K562 (cell line): ENCODE measurements at regions of chr10 and their contacts with region 1.

Region 1: DNA sequence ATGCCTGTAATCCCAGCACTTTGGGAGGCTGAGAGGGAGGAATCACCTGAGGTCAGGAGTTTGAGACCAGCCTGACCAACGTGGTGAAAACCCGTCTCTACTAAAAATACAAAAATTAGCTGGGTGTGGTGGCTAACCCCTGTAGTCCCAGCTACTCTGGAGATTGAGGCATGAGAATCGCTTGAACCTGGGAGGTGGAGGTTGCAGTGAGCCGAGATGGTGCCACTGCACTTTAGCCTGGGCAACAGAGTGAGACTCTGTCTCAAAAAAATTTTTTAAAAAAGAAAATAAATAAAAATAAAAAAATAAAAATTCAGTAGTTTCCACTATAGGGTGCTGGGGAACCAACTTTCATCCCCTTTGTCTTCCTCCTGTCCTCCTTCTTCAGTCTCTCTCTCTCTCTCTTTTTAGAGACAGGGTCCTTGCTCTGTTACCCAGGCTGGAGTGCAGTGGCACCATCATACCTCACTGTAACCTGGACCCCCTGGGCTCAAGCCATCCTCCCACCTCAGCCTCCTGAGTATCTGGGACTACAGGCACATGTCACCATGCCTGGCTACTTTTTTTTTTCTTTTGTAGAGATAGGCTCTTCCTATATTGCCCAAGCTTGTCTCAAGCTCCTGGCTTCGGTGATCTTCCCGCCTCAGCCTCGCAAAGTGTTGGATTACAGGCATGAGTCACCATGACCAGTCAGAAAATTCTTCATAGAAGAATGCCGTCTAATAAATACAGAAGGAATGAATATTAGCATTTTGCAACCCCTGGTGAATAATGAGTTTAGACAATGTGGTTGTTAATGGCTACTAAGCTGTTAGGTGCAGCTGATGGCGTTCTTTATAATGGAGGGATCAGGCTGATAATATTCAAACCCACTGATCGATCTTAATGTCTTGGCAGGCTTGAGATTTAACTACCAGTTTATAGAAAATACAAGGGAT is 20.6 kb downstream of the RBM20 start:
- DNase-seq: peak in 2 of 4 experiments; percentile 29 to 90
- ATAC-seq: peak; percentile 89
- H3K4me3 ChIP-seq: no peak overlapping the region
- H3K27ac ChIP-seq: peak overlapping the region; percentile 98
- H3K4me1 ChIP-seq: peaks cover 12 to 16% of the 10 kb centered on the region in 2 experiments; a peak in 4 of 5 replicates
- H3K27me3 ChIP-seq: no peaks in the 10 kb centered on the region
- CTCF ChIP-seq: no peak
- EP300 ChIP-seq: peak; percentile 74
- POLR2A ChIP-seq: peak; percentile 60; the same call in 1 of the 2 replicates
- RAD21 ChIP-seq: no peak

Region 2: GRCh38 chr10:110378006-110378405 is 286.7 kb before region 1 on chr10:
- CTCF ChIA-PET with region 1: no interaction called
- POLR2A ChIA-PET with region 1: no interaction called
- in situ Hi-C with region 1: no loop called
- intact Hi-C with region 1: no loop called
- DNase-seq: no peak
- ATAC-seq: no peak
- H3K4me3 ChIP-seq: no peak overlapping the region
- H3K27ac ChIP-seq: no peak overlapping the region
- H3K4me1 ChIP-seq: peaks cover 7 to 30% of the 10 kb centered on the region in 2 experiments; a peak in 4 of 5 replicates
- H3K27me3 ChIP-seq: no peaks in the 10 kb centered on the region; a peak in 1 of 5 replicates
- CTCF ChIP-seq: no peak
- EP300 ChIP-seq: no peak
- POLR2A ChIP-seq: no peak
- RAD21 ChIP-seq: no peak

Region 3: GRCh38 chr10:110425684-110426293 is 239.0 kb before region 1 on chr10:
- CTCF ChIA-PET with region 1: no interaction called
- POLR2A ChIA-PET with region 1: no interaction called
- in situ Hi-C with region 1: no loop called
- intact Hi-C with region 1: no loop called
- DNase-seq: peak in 2 of 4 experiments; percentile 51 to 66
- ATAC-seq: peak; percentile 79
- H3K4me3 ChIP-seq: no peak overlapping the region
- H3K27ac ChIP-seq: peak overlapping the region; percentile 73; the same call in 2 of the 3 replicates
- H3K4me1 ChIP-seq: peaks cover 0 to 30% of the 10 kb centered on the region in 2 experiments; a peak in 4 of 5 replicates
- H3K27me3 ChIP-seq: no peaks in the 10 kb centered on the region
- CTCF ChIP-seq: no peak
- EP300 ChIP-seq: no peak
- POLR2A ChIP-seq: no peak
- RAD21 ChIP-seq: 0 out of 4 replicates have a peak, but pooled peaks have one; percentile 6 to 9

Region 4: GRCh38 chr10:110629680-110630191 is 35.0 kb before region 1 on chr10:
- CTCF ChIA-PET with region 1: no interaction called
- POLR2A ChIA-PET with region 1: no interaction called
- in situ Hi-C with region 1: loop called (anchors 5 kb)
- intact Hi-C with region 1: no loop called
- DNase-seq: no peak
- ATAC-seq: no peak
- H3K4me3 ChIP-seq: no peak overlapping the region
- H3K27ac ChIP-seq: no peak overlapping the region
- H3K4me1 ChIP-seq: no peaks in the 10 kb centered on the region; a peak in 2 of 5 replicates
- H3K27me3 ChIP-seq: no peaks in the 10 kb centered on the region
- CTCF ChIP-seq: no peak
- EP300 ChIP-seq: no peak
- POLR2A ChIP-seq: no peak
- RAD21 ChIP-seq: no peak

Region 5: GRCh38 chr10:110648692-110649346 is 15.9 kb before region 1 on chr10:
- CTCF ChIA-PET with region 1: no interaction called
- POLR2A ChIA-PET with region 1: interaction called, 18 read pairs
- in situ Hi-C with region 1: no loop called
- intact Hi-C with region 1: no loop called
- DNase-seq: no peak
- ATAC-seq: no peak
- H3K4me3 ChIP-seq: no peak overlapping the region
- H3K27ac ChIP-seq: no peak overlapping the region
- H3K4me1 ChIP-seq: peaks cover 13 to 24% of the 10 kb centered on the region in 2 experiments
- H3K27me3 ChIP-seq: no peaks in the 10 kb centered on the region
- CTCF ChIP-seq: no peak
- EP300 ChIP-seq: no peak
- POLR2A ChIP-seq: no peak
- RAD21 ChIP-seq: no peak

Region 6: DNA sequence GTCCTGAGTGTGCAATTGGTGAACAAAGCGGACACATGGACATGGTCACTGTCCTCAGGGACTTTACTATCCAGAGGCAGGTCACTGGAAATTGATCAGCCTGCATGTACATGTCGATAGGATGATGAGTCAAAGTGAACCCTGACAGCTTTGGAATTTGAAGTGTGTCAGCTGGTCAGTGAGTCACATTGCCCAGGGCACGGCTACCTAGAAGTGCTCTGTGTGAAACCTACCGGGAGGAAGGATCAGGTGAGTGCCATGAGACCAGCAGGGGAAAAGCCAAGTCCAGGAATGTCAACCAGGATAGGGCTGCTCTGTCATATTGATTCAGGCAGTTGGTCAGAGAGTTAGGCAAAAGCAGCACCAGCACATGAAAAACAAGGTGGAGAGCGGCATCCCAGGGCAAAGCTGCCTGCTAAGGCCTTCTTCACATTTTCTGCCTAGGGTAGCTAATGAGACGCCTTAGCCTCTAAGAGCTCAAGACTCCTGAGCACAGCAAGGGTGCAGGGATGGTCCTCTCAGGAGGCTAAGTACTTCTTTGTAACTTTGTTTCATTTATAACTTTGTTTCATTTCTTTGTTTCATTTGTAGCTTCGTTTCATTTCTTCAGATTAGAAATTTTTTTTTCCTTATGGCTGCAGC is 187.6 kb after region 1 on chr10:
- CTCF ChIA-PET with region 1: no interaction called
- POLR2A ChIA-PET with region 1: no interaction called
- in situ Hi-C with region 1: no loop called
- intact Hi-C with region 1: no loop called
- DNase-seq: no peak
- ATAC-seq: no peak
- H3K4me3 ChIP-seq: no peak overlapping the region
- H3K27ac ChIP-seq: no peak overlapping the region
- H3K4me1 ChIP-seq: peaks cover 3 to 7% of the 10 kb centered on the region in 2 experiments; a peak in 3 of 5 replicates
- H3K27me3 ChIP-seq: no peaks in the 10 kb centered on the region
- CTCF ChIP-seq: no peak
- EP300 ChIP-seq: no peak
- POLR2A ChIP-seq: no peak
- RAD21 ChIP-seq: no peak